CD4-positive, alpha-beta memory T cell (primary cell): ENCODE measurements at regions of chr18 and their contacts with region 1.

Region 1: DNA sequence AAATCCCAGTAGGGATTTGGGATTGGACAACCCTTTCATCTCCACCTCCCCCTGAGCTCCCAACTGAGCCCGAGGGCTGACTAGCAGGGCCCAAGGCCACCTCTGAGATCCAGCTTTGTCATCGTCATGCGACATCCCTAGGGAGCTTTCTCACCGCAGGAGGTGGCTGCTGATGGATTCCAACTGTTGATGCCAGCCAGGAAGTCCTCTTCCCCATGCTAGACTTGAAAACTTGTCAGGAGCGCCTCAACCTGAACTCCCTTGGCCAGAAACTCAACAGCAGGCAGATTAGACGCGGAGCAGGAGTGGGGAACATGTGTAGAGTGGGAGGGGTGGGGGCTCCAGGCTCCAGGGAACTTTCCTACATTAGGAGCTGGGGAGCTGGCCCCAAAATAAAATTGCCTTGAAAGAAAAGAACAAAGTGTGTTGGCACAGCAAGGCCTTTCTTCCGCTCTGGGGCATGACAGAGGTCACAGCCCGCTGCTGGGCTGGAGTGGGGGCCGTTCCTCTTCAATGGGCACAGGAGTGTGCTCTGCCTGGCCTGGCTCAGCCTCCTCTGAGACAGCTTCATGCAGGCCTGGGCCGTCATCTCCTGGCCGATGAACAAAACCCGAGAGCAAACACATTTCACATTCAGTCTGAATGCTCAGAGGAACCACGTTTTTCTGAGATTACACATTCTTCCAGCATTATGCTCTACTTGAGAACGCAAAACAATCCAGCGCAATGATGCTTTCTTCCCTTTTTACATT is 34.5 kb downstream of the EMILIN2 start:
- DNase-seq: no peak
- H3K4me3 ChIP-seq: no peak overlapping the region
- H3K4me3 Mint-ChIP-seq: peak overlapping the region; percentile 80 to 88 (median 82)
- H3K27ac ChIP-seq: peak overlapping the region; percentile 57
- H3K27ac Mint-ChIP-seq: peak overlapping the region; percentile 87 to 93 (median 90)
- H3K4me1 ChIP-seq: peaks cover 44% of the 10 kb centered on the region
- H3K4me1 Mint-ChIP-seq: peaks cover 20 to 60% (median 33%) of the 10 kb centered on the region in 4 donors
- H3K27me3 ChIP-seq: no peaks in the 10 kb centered on the region
- H3K27me3 Mint-ChIP-seq: no peaks in the 10 kb centered on the region

Region 2: GRCh38 chr18:2826581-2826980 is 54.7 kb before region 1 on chr18:
- CTCF ChIA-PET with region 1: no interaction called
- POLR2A ChIA-PET with region 1: no interaction called
- intact Hi-C with region 1: no loop called
- DNase-seq: no peak
- H3K4me3 ChIP-seq: no peak overlapping the region
- H3K4me3 Mint-ChIP-seq: no peak overlapping the region
- H3K27ac ChIP-seq: no peak overlapping the region
- H3K27ac Mint-ChIP-seq: no peak overlapping the region
- H3K4me1 ChIP-seq: no peaks in the 10 kb centered on the region
- H3K4me1 Mint-ChIP-seq: no peaks in the 10 kb centered on the region
- H3K27me3 ChIP-seq: no peaks in the 10 kb centered on the region
- H3K27me3 Mint-ChIP-seq: peaks cover 0 to 1% of the 10 kb centered on the region in 2 donors

Region 3: DNA sequence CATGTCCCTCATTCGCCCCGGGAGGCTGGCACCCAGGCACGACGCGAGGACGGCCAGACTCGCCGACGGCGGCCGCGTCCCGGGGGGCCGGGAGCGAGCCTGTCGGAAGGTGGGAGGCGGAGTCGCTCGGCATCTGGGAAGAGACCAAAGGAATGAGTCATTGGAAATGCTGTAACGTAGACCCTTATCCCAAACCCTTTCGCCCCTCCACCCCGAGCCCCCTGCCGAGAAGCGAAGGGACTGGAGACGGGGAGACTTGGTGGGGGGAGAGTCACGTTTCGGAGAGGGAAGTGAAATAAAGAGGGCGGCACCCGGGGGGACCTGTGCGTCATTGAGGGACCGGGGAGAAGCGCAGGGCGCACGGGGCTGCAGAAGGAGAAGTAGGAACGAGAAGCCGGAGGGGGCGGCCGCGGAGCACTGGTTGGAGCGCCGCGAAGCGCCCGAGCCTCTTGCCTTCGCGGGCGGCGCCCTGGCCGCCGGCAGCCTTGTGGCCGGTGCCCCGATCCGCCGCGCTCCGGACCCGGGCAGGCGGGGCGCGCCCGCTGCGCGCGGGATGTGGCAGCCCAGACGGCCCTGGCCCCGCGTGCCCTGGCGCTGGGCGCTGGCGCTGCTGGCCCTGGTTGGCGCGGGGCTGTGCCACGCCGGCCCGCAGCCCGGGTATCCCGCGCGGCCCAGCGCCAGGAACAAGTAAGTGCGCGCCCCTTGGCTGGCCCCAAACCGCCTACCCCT is 34.5 kb before region 1 on chr18 and contains the start of gene EMILIN2:
- CTCF ChIA-PET with region 1: interaction called, 3 read pairs
- POLR2A ChIA-PET with region 1: interaction called, 4 read pairs
- intact Hi-C with region 1: loop called (anchors 5 kb)
- DNase-seq: peak; percentile 32 to 58 (median 37)
- H3K4me3 ChIP-seq: peak within 1 kb of the TSS; percentile 23 to 64
- H3K4me3 Mint-ChIP-seq: peak within 1 kb of the TSS; percentile 86 to 94 (median 91)
- H3K27ac ChIP-seq: no peak within 1 kb of the TSS
- H3K27ac Mint-ChIP-seq: peak within 1 kb of the TSS in 5 of 7 donors; percentile 35 to 73 (median 65)
- H3K4me1 ChIP-seq: peaks cover 29% of the 10 kb centered on the region
- H3K4me1 Mint-ChIP-seq: peaks cover 15 to 24% (median 21%) of the 10 kb centered on the region in 4 donors
- H3K27me3 ChIP-seq: peaks cover 21% of the 10 kb centered on the region
- H3K27me3 Mint-ChIP-seq: peaks cover 33 to 35% of the 10 kb centered on the region in 2 donors
- total RNA-seq, gene EMILIN2: 9.5 to 11.4 TPM

Region 4: GRCh38 chr18:2898186-2898640 is 16.9 kb after region 1 on chr18:
- CTCF ChIA-PET with region 1: interaction called, 3 read pairs
- POLR2A ChIA-PET with region 1: interaction called, 13 read pairs
- intact Hi-C with region 1: no loop called
- DNase-seq: no peak
- H3K4me3 ChIP-seq: no peak overlapping the region
- H3K4me3 Mint-ChIP-seq: no peak overlapping the region
- H3K27ac ChIP-seq: no peak overlapping the region
- H3K27ac Mint-ChIP-seq: peak overlapping the region in 2 of 7 donors; percentile 72 to 79
- H3K4me1 ChIP-seq: peaks cover 15% of the 10 kb centered on the region
- H3K4me1 Mint-ChIP-seq: peaks cover 8 to 41% (median 18%) of the 10 kb centered on the region in 4 donors
- H3K27me3 ChIP-seq: no peaks in the 10 kb centered on the region
- H3K27me3 Mint-ChIP-seq: no peaks in the 10 kb centered on the region